BJ (cell line): ENCODE measurements at regions of chr11 and their contacts with region 1.

Region 1: DNA sequence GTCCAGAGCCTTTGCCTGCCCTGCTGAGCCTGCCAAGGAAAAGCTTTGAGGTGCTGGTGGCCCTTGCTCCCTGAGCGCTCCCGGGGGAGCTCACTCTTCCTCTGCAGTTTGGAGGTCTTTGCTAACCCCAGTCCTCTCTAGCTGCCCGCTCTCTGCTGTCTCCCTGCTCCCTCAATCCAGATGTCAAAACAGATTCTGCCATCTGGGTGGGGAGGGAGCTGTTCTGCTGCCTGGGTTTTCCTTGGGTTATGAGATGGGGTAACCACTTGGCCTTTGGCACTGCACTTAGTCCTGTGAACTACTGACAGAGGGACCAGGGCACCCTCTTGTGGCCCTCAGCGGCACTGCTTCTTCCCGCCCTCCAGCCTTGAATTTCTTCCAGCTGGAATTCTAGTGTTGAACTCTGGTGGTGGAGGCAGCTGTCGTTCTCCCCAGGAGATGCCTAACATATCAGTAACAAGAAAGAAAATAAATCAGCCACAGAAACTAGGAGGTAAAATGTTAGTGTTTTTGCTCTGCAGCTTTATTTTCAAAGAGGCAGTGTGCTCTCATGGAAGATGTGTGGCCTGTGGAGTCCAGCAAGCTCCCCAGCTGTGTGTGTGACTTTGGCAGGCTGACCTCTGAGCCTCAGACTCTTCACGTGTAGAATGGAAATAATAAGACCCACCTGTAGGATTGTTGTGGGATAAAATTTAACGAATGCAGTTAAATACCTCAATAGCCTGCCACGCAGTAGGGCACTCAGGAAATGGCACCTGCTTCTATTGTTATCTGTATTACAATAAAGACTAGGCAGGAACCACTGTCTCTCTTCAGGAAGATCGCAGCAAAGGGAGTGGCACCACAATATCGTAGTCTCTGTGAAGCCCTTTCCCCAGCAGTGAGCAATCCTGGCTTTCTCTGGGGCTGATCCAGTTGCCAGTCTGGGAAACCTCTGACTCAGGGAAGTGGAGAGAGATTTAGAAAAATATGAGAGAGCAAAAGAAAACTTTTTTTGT is 23.4 kb downstream of the ARFGAP2 start:
- DNase-seq: no peak
- H3K4me3 ChIP-seq: no peak overlapping the region
- H3K27me3 ChIP-seq: no peaks in the 10 kb centered on the region
- CTCF ChIP-seq: peak; percentile 99

Region 2: GRCh38 chr11:46876471-46876870 is 276.8 kb before region 1 on chr11:
- CTCF ChIA-PET with region 1: interaction called, 14 read pairs
- POLR2A ChIA-PET with region 1: no interaction called
- DNase-seq: no peak
- H3K4me3 ChIP-seq: no peak overlapping the region
- H3K27me3 ChIP-seq: no peaks in the 10 kb centered on the region
- CTCF ChIP-seq: no peak

Region 3: GRCh38 chr11:46896719-46897406 is 256.4 kb before region 1 on chr11:
- CTCF ChIA-PET with region 1: interaction called, 38 read pairs
- POLR2A ChIA-PET with region 1: no interaction called
- DNase-seq: no peak
- H3K4me3 ChIP-seq: no peak overlapping the region
- H3K27me3 ChIP-seq: no peaks in the 10 kb centered on the region
- CTCF ChIP-seq: 0 out of 2 replicates have a peak, but pooled peaks have one; percentile 19

Region 4: GRCh38 chr11:46916286-46917108 is 236.8 kb before region 1 on chr11:
- CTCF ChIA-PET with region 1: interaction called, 25 read pairs
- POLR2A ChIA-PET with region 1: interaction called, 5 read pairs
- DNase-seq: no peak
- H3K4me3 ChIP-seq: peak overlapping the region; percentile 49
- H3K27me3 ChIP-seq: no peaks in the 10 kb centered on the region
- CTCF ChIP-seq: peak; percentile 39

Region 5: DNA sequence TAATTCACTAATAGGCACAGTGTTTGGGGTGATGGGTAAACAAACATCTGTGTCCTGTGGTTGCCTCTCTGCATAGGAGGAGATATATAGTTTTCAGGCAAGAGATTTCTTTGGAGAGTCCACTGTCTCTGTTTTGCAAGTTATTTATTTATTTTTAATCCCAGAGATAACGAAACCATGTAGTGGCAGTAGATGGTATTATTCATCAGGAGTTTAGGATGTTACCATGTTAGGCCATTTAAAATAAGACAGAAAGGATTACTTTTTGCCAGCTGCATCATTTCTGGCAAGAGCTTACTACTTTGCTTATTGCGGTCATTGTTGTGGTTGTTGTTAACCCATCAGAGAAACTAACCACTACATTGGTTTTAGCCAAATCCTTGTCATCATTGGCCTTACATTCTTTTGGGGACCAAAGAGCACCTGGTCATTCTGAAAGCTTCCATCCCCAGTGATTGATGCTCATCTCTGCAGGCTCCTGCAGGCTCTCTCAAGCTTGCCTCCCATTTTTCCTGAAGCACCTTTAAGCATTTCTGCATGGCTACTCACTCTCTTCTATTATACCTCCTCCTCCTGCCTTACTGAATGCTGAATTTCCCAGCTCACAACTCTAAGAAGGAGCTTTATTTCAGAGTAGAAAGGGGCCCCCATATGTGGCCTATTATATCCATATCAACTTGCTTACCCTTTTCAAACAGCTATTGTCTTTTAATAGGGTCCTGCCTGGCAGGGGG is 132.3 kb before region 1 on chr11:
- CTCF ChIA-PET with region 1: no interaction called
- POLR2A ChIA-PET with region 1: no interaction called
- DNase-seq: no peak
- H3K4me3 ChIP-seq: no peak overlapping the region
- H3K27me3 ChIP-seq: no peaks in the 10 kb centered on the region
- CTCF ChIP-seq: no peak

Region 6: GRCh38 chr11:47399860-47400767 is 246.9 kb after region 1 on chr11:
- CTCF ChIA-PET with region 1: no interaction called
- POLR2A ChIA-PET with region 1: no interaction called
- DNase-seq: no peak
- H3K4me3 ChIP-seq: peak overlapping the region; percentile 47
- H3K27me3 ChIP-seq: no peaks in the 10 kb centered on the region
- CTCF ChIP-seq: no peak